ENCODE measurements at regions of chr17 and their contacts with region 1.

Region 1: DNA sequence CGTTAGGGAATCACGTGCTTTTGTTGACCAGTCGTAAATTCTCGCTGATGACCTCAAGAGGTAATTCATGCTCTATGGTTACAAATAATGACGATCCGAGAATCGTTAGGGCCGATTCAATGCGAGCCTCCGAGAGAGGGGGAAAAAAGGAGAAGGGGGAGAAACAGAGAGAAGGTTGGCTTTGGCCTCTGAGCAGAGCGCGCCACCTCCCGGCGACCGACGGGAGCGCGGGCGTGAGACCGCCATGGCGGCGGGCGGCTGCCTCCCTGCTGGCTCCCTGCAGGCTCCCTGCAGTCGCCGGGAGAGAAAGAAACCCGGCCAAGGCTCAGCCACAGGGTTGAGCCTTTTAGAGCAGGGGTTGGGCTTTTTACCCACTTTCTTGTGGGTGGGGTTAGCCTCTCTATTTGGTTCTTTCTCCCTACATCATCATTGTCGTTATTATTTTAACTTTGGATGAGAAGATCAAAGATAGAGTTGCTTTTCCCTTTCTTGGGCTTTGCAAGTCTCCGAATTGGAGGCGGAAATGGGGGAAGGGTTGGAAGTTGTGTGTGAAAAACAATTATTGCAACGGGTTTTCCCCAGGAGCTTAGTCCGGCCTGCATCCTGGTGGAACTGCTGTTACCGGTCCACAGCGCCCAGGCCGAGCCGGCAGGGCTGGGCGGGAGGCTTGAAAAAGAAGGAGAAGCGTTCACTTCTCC is 410 bp upstream of the HOXB5 start:
- H3K4me3 Mint-ChIP-seq: no peak overlapping the region
- H3K27ac Mint-ChIP-seq: no peak overlapping the region
- H3K4me1 Mint-ChIP-seq: peaks cover 61% of the 10 kb centered on the region
- H3K27me3 Mint-ChIP-seq: peaks cover 100% of the 10 kb centered on the region

Region 2: DNA sequence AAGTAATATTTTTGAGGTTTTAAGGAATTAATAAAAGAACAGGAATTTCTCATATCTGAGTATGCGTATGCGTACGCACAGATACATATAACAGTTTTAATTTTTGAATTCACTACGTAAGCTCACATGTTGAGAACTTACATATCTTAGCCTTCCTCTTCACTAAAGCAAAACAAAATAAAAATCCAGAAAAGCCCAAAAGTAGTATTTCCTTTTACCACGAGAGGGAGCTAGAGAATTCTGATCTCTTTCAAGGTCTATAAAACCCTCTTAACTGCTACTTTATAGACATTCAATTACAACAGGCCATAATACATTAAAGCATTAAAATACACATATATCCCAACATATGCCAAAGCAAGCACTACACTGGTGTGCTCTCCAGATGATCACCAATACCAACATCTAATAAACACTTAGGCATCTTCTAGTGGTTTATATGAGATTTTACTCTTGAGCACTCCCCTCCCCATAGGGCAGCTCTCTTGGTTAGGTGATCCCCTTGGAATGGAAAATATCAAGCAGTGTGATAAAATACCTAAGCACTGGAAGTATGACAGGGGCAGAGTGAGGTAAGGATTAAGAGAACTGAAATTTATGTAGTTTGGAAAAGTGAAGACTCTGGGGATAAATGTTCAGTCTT is 258.0 kb before region 1 on chr17:
- intact Hi-C with region 1: loop called (anchors 5 kb)
- H3K4me3 Mint-ChIP-seq: no peak overlapping the region
- H3K27ac Mint-ChIP-seq: no peak overlapping the region
- H3K4me1 Mint-ChIP-seq: peaks cover 6% of the 10 kb centered on the region
- H3K27me3 Mint-ChIP-seq: peaks cover 20% of the 10 kb centered on the region

Region 3: DNA sequence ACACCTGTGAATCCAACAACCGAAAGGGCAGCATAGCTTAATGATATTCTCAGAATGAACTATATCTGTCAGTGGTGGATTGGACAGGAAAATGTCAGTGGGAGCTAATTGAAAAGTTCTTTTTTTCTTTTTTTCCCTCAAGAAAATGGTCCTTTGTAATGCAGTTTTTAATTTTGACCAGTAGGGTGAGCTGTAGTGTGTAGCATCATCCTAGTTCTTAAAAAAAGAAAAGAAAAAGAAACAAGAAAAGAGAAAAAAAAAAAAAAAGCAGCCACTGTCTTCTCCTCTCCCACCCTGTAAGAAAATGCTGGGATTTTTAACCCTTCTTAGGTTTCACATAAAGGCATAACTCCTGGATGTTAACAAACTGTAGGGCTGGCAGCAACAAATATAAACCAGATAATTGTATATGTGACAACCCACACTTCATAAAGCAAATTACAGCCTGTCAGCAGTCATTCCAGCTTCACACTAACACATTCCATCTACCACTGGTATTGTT is 242.1 kb before region 1 on chr17:
- intact Hi-C with region 1: loop called (anchors 2 kb)
- H3K4me3 Mint-ChIP-seq: no peak overlapping the region
- H3K27ac Mint-ChIP-seq: no peak overlapping the region
- H3K4me1 Mint-ChIP-seq: no peaks in the 10 kb centered on the region
- H3K27me3 Mint-ChIP-seq: peaks cover 23% of the 10 kb centered on the region

Measured in dendritic cell treated with granulocyte-macrophage colony-stimulating factor and Interleukin-4, amounts not matched to agents 40 ng/mL and 50 ng/mL, for 4 days (primary cell).